ENCODE measurements at regions of chr6 and their contacts with region 1.

Region 1: DNA sequence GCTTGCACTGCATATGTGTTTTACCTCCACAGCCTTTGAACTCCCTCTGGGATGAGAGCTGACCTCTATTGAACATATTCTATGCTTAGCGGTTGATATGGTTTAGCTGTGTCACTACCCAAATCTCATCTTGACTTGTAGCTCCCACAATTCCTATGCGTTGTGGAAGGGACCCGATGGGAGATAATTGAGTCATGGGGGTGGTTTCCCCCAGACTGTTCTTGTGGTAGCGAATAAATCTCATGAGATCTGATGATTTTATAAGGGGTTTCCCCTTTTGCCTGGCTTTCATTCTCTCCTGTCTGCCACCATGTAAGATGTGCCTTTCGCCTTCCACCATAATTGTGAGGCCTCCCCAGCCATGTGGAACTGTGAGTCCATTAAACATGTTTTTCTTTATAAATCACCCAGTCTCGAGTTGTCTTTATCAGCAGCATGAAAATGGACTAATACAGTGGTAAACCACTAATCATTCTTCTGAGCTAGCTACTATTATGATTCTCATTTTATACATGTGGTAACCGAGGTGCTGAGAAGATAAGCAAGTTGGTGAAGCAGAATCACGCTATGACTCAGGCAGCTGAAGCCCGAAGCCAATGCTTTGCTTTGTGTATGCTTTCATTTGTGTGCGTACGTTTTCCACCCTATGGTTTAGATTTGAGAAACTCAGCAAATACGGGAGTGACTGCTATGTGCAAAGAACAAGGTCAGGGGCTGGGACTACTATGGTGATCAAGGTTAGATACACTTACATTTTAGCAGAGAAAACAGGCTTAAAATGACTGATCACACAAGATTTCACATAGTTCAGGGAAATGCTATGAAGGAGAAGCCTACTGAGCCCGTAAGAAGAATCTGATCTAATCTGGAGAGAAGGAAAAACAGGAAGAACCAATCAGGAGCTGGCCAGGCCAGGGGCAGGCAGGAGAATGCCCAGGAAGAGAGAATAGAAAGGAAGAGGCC is 363.5 kb downstream of the ESR1 start:
- DNase-seq: peak; percentile 54 to 85 (median 60)
- H3K4me3 ChIP-seq: peak overlapping the region; percentile 41 to 44
- H3K4me3 Mint-ChIP-seq: peak overlapping the region; percentile 43 to 84 (median 76)
- H3K27ac ChIP-seq: peak overlapping the region; percentile 71
- H3K27ac Mint-ChIP-seq: peak overlapping the region; percentile 86 to 97 (median 94)
- H3K4me1 ChIP-seq: peaks cover 47% of the 10 kb centered on the region
- H3K4me1 Mint-ChIP-seq: peaks cover 49 to 62% (median 55%) of the 10 kb centered on the region in 4 donors
- H3K27me3 ChIP-seq: no peaks in the 10 kb centered on the region
- H3K27me3 Mint-ChIP-seq: no peaks in the 10 kb centered on the region

Region 2: DNA sequence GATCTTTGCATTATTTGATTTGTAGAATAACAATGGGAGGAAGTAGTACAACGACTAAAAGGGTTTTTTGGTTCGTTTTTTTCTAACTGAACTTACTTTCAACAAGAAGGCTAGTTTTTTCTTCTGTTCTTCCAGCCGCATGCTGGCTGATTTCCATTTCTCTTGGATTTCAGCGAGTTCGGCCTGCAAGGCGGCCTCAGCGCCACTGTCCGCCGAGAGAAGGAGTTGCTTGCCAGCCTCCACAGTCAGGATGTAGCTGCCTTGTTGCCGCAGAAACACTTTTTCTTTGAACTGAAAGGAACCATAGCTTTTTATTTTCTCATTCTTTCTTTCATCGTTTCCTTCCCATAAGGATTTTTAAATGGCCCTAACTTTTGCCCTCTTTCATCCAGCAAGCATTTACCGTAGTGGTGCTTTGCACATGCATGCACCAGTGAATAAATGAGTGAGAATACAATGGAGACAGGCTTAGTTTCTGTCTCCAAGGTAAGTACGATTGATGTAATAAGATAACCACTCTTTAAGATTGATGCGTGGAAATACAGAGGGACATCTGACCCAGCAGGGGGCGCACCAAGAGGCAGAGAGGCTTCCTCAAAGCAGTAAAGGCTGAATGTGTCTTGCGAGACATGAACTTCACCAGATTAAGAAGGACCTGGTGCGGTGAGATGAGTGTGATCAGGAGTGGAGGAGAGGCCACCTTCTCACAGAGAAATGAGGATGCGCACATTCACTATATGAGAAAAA is 35.3 kb after region 1 on chr6:
- CTCF ChIA-PET with region 1: interaction called, 4 read pairs
- POLR2A ChIA-PET with region 1: no interaction called
- intact Hi-C with region 1: loop called (anchors 5 kb)
- DNase-seq: peak in 4 of 5 donors; percentile 33 to 44 (median 36)
- H3K4me3 ChIP-seq: no peak overlapping the region
- H3K4me3 Mint-ChIP-seq: no peak overlapping the region
- H3K27ac ChIP-seq: no peak overlapping the region
- H3K27ac Mint-ChIP-seq: peak overlapping the region in 5 of 7 donors; percentile 9 to 77 (median 16)
- H3K4me1 ChIP-seq: no peaks in the 10 kb centered on the region
- H3K4me1 Mint-ChIP-seq: peaks cover 3 to 10% (median 6%) of the 10 kb centered on the region in 4 donors
- H3K27me3 ChIP-seq: no peaks in the 10 kb centered on the region
- H3K27me3 Mint-ChIP-seq: no peaks in the 10 kb centered on the region

Region 3: GRCh38 chr6:152244998-152245630 is 74.1 kb after region 1 on chr6:
- CTCF ChIA-PET with region 1: no interaction called
- POLR2A ChIA-PET with region 1: no interaction called
- intact Hi-C with region 1: loop called (anchors 5 kb)
- DNase-seq: no peak
- H3K4me3 ChIP-seq: no peak overlapping the region
- H3K4me3 Mint-ChIP-seq: no peak overlapping the region
- H3K27ac ChIP-seq: no peak overlapping the region
- H3K27ac Mint-ChIP-seq: peak overlapping the region in 5 of 7 donors; percentile 12 to 53 (median 42)
- H3K4me1 ChIP-seq: no peaks in the 10 kb centered on the region
- H3K4me1 Mint-ChIP-seq: peaks cover 0 to 4% (median 0%) of the 10 kb centered on the region in 4 donors
- H3K27me3 ChIP-seq: no peaks in the 10 kb centered on the region
- H3K27me3 Mint-ChIP-seq: no peaks in the 10 kb centered on the region

Measured in CD4-positive, alpha-beta memory T cell (primary cell).